ENCODE measurements at regions of chr2 and their contacts with region 1.

Region 1: GRCh38 chr2:10043906-10044601 is 704 bp downstream of the KLF11 start:
- DNase-seq: peak; percentile 94
- H3K4me3 Mint-ChIP-seq: peak overlapping the region; percentile 64
- H3K27ac Mint-ChIP-seq: peak overlapping the region; percentile 47
- H3K4me1 Mint-ChIP-seq: peaks cover 22% of the 10 kb centered on the region
- H3K27me3 Mint-ChIP-seq: peaks cover 3% of the 10 kb centered on the region

Region 2: DNA sequence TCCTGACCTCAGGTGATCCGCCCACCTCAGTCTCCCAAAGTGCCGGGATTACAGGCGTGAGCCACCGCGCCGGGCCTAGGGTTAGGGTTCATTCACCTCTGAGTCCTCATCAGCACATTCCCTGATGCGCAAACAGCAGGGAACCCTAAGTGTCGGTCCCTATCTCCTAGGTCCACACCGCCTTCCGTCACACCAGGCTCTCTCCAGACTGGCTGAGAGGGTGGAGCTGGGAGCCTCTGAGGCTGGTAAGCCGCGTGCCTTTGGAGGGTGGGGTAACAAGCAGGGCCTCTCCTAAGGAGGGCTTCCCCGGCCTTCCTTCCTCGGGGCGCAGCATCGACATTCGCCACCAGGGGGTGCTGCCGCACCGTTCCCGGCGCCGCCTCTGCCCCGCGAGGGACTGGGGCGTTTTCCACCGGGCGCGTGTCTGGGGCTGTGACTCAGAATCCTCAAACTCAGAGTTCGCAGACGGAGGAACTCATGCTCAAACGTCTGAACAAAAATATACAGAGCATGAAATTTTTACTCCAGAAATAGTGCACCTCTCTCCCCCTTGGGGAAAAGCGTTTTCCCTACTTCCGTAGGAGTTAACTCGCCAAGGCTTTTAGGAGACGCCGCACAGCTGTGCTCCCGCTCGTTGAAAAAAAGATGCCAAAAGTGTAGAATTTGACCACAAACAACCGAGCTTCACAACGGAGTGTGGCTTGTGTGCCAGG is 901.3 kb before region 1 on chr2:
- CTCF ChIA-PET with region 1: no interaction called
- POLR2A ChIA-PET with region 1: no interaction called
- intact Hi-C with region 1: loop called (anchors 5 kb)
- DNase-seq: peak; percentile 89
- H3K4me3 Mint-ChIP-seq: no peak overlapping the region
- H3K27ac Mint-ChIP-seq: no peak overlapping the region
- H3K4me1 Mint-ChIP-seq: no peaks in the 10 kb centered on the region
- H3K27me3 Mint-ChIP-seq: peaks cover 14% of the 10 kb centered on the region

Region 3: DNA sequence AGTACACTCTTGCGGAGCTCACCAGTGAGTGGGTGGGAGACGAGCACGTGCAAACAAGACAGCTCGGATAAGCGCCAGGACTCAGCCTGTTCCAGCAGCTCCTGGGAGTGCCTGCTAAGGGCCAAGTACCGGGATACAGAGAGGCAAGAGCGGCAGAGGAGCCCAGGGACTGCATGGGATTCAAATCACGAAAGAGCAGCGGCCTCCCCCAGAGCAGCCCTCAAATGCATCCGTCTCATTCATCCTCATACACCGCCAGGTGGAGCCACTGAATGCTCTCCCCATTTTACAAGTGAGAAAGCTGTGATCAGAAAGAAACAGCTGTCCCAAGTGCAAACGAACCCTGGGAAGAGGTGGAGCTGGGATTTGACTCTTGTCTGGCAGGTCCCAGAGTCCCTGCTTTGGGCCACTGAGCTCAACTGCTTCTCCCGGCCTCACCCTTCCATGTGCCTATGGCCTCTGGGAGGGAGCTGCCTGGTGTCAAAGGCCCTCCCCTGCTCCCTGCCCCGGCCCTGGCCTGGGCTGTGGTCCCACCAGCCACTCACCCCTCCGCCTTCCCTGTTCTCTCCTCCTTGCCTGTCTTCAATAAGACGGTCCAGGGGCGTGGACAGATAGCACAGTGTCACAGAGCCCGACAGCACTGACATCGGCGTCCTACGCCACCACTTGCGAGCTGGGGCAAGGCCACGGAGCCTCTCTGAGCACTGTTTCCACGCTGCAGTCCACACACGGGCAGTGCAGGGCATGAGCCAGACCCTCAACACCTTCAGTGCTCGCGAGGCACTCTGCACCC is 273.6 kb before region 1 on chr2:
- CTCF ChIA-PET with region 1: interaction called, 18 read pairs
- POLR2A ChIA-PET with region 1: no interaction called
- intact Hi-C with region 1: no loop called
- DNase-seq: peak; percentile 74
- H3K4me3 Mint-ChIP-seq: no peak overlapping the region
- H3K27ac Mint-ChIP-seq: no peak overlapping the region
- H3K4me1 Mint-ChIP-seq: peaks cover 23% of the 10 kb centered on the region
- H3K27me3 Mint-ChIP-seq: no peaks in the 10 kb centered on the region

Region 4: DNA sequence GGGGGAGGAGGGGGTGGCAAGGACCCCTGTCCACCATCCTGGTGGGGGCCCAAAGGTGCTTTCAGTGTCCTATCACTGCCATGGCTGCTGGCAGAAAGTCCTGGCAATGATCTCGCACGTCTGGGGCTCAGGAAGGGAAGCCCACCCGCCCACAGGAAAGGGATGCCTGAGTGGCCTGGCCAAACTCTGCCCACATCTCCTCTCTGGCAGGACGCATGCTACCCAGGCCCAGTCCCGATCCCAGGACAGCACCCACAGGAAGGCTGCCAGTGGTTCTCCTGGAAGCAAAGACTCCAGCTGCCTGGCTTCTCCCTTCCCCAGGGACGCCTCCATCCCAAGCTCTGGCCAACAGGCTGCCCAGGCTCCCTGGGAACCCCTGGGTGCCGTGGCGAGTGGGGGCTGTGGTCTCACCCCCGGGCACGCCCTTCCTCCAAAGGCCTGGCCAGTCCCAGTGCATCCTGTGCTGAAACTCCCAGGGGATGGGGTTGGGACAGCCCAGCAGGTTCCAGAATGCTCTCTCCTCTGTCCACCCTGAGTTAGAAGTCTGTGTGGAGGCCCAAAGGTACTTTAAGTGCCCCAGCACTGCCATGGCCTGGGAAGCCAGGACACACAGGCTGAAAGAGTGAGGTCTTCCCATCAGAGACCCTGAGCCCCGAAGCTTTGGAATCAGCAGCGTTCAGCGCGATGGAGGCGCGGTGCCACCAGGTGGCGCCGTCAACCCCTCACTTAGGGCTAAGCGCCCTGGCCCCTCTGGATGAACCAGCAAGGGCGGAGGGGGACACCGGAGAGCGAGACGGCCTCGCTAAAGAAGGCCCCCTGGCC is 230.5 kb before region 1 on chr2:
- CTCF ChIA-PET with region 1: interaction called, 149 read pairs
- POLR2A ChIA-PET with region 1: interaction called, 3 read pairs
- intact Hi-C with region 1: loop called (anchors 1 kb)
- DNase-seq: peak; percentile 80
- H3K4me3 Mint-ChIP-seq: no peak overlapping the region
- H3K27ac Mint-ChIP-seq: no peak overlapping the region
- H3K4me1 Mint-ChIP-seq: peaks cover 14% of the 10 kb centered on the region
- H3K27me3 Mint-ChIP-seq: peaks cover 5% of the 10 kb centered on the region

Region 5: DNA sequence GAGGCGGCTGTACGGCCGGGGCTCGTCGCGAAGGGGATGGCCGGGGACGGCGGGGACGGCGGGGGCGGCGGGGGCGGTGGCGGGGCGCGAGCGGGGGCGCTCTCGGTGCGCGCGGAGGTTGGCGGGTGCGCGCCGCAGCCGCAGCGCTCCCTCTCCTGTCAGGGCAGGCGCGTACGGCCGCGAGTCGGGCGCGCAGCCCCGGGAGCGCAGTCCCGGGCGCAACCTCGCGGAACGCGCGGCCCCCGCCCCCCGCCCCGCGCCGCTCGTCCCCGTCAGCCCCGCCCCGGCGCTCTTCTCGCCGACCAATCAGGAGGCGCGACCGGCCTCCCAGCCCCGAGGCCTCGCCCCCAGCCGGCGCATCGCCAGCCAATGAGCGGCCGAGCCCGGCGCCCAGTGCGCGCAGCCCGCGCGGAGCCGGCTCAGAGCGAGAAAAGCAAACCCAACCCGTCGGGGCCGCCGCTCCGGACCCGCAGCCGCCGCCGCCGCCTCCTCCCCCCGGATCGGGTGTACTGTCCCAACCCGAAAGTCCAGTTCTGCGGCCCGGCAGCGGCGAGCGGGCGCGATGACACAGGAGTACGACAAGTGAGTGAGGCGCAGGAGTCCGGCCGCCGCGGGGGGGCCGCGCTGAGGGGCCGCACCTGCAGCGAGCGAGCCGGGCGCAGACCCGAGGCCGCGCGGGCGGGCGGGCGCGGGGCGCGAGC is 92.6 kb before region 1 on chr2 and contains the start of gene GRHL1:
- CTCF ChIA-PET with region 1: interaction called, 3 read pairs
- POLR2A ChIA-PET with region 1: no interaction called
- intact Hi-C with region 1: loop called (anchors 1 kb)
- DNase-seq: peak; percentile 93
- H3K4me3 Mint-ChIP-seq: peak within 1 kb of the TSS; percentile 74
- H3K27ac Mint-ChIP-seq: no peak within 1 kb of the TSS
- H3K4me1 Mint-ChIP-seq: peaks cover 5% of the 10 kb centered on the region
- H3K27me3 Mint-ChIP-seq: peaks cover 30% of the 10 kb centered on the region
- total RNA-seq, gene GRHL1: 1.00 to 1.1 TPM

Region 6: GRCh38 chr2:9984217-9984739 is 59.8 kb before region 1 on chr2:
- CTCF ChIA-PET with region 1: interaction called, 149 read pairs
- POLR2A ChIA-PET with region 1: interaction called, 5 read pairs
- intact Hi-C with region 1: loop called (anchors 1 kb)
- DNase-seq: peak; percentile 52
- H3K4me3 Mint-ChIP-seq: no peak overlapping the region
- H3K27ac Mint-ChIP-seq: peak overlapping the region; percentile 15
- H3K4me1 Mint-ChIP-seq: peaks cover 16% of the 10 kb centered on the region
- H3K27me3 Mint-ChIP-seq: peaks cover 5% of the 10 kb centered on the region

Region 7: GRCh38 chr2:10057231-10058107 is 13.4 kb after region 1 on chr2:
- CTCF ChIA-PET with region 1: interaction called, 15 read pairs
- POLR2A ChIA-PET with region 1: no interaction called
- intact Hi-C with region 1: no loop called
- DNase-seq: peak; percentile 56
- H3K4me3 Mint-ChIP-seq: peak overlapping the region; percentile 1
- H3K27ac Mint-ChIP-seq: no peak overlapping the region
- H3K4me1 Mint-ChIP-seq: peaks cover 1% of the 10 kb centered on the region
- H3K27me3 Mint-ChIP-seq: no peaks in the 10 kb centered on the region

Region 8: DNA sequence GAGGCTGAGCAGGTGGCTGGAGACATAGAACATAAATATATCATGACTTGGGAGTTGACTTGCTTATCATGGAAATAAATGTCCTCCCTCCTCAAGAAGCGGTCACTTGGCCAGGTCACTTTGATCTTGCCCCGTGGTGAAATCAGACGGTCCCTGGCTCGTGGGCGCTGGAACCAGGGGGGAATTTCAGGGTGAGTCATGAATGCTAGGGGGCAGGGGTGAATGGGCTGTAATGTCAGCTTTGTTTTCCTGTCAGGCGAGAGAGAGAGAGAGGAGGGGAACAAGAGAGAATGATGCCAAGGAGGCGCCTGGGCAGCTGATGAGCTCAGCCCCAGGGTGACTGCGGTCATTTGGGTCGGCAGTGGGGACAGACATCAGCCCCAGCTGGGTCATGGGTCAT is 126.2 kb after region 1 on chr2:
- CTCF ChIA-PET with region 1: no interaction called
- POLR2A ChIA-PET with region 1: no interaction called
- intact Hi-C with region 1: no loop called
- DNase-seq: no peak
- H3K4me3 Mint-ChIP-seq: no peak overlapping the region
- H3K27ac Mint-ChIP-seq: no peak overlapping the region
- H3K4me1 Mint-ChIP-seq: no peaks in the 10 kb centered on the region
- H3K27me3 Mint-ChIP-seq: no peaks in the 10 kb centered on the region